ENCODE measurements at regions of chr1 and their contacts with region 1.

Region 1: DNA sequence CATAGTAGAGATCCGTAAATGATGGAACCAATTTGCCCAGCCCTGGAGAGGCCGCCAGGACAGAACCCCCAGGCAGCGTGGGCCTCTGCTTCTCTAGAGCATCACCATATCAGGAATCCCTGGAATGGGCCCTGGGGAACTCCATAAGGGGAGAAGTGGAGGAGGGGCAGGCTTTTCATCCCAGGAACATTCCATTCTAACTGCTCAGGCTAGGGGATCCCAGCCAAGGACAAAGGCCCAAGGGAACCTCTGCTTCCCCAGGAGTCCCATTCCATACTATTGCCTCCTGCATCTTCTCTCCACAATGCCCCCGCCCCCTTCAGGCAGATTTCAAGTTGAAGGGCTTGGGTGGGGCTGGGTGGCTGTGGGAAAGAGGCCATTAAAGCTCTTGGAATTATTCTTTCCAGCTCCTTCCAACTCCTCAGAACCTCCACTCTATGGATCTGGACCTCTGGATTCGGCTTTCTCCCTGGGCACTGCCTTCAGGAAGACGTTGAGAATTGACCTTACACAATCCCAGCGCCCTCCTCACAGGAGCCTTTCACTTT is 6.0 kb downstream of the TRNP1 start:
- DNase-seq: peak; percentile 79 to 94
- H3K4me3 ChIP-seq: peak overlapping the region in 2 of 4 experiments; percentile 15 to 29; a peak in 3 of 8 replicates
- H3K27ac ChIP-seq: peak overlapping the region; percentile 80
- H3K4me1 ChIP-seq: peaks cover 27 to 65% (median 38%) of the 10 kb centered on the region in 4 experiments
- H3K27me3 ChIP-seq: no peaks in the 10 kb centered on the region; a peak in 1 of 7 replicates
- CTCF ChIP-seq: peak in 2 of 3 experiments; percentile 4 to 21; a peak in 1 of 4 replicates
- EP300 ChIP-seq: peak in 1 of 2 experiments; percentile 98; a peak in 2 of 3 replicates
- POLR2A ChIP-seq: peak in 1 of 2 experiments; percentile 87; a peak in 2 of 3 replicates
- RAD21 ChIP-seq: peak in 1 of 2 experiments; percentile 3; a peak in 1 of 4 replicates

Region 2: GRCh38 chr1:26959722-26960615 is 39.5 kb before region 1 on chr1 and contains the start of gene KDF1:
- CTCF ChIA-PET with region 1: interaction called, 5 read pairs
- POLR2A ChIA-PET with region 1: interaction called, 35 read pairs
- DNase-seq: peak; percentile 77 to 95
- H3K4me3 ChIP-seq: peak within 1 kb of the TSS; percentile 84 to 97 (median 86)
- H3K27ac ChIP-seq: peak within 1 kb of the TSS; percentile 76; the same call in 1 of the 2 replicates
- H3K4me1 ChIP-seq: peaks cover 0 to 3% (median 0%) of the 10 kb centered on the region in 4 experiments; a peak in 3 of 7 replicates
- H3K27me3 ChIP-seq: no peaks in the 10 kb centered on the region
- CTCF ChIP-seq: peak; percentile 15 to 34 (median 26); a peak in 2 of 4 replicates
- EP300 ChIP-seq: peak; percentile 4 to 86; a peak in 2 of 3 replicates
- POLR2A ChIP-seq: peak in 1 of 2 experiments; percentile 62; a peak in 1 of 3 replicates
- RAD21 ChIP-seq: no peak; a peak in 1 of 4 replicates
- total RNA-seq, gene KDF1: 16.7 and 16.9 TPM in 2 replicates

Region 3: GRCh38 chr1:27021354-27022031 is 22.0 kb after region 1 on chr1:
- CTCF ChIA-PET with region 1: interaction called, 133 read pairs
- POLR2A ChIA-PET with region 1: interaction called, 1,829 read pairs
- DNase-seq: no peak
- H3K4me3 ChIP-seq: no peak overlapping the region
- H3K27ac ChIP-seq: no peak overlapping the region
- H3K4me1 ChIP-seq: peaks cover 0 to 6% (median 4%) of the 10 kb centered on the region in 4 experiments
- H3K27me3 ChIP-seq: no peaks in the 10 kb centered on the region; a peak in 1 of 7 replicates
- CTCF ChIP-seq: no peak
- EP300 ChIP-seq: no peak
- POLR2A ChIP-seq: no peak
- RAD21 ChIP-seq: no peak

Region 4: GRCh38 chr1:27057801-27058625 is 58.5 kb after region 1 on chr1:
- CTCF ChIA-PET with region 1: interaction called, 6 read pairs
- POLR2A ChIA-PET with region 1: interaction called, 29 read pairs
- DNase-seq: peak in 1 of 2 experiments; percentile 65
- H3K4me3 ChIP-seq: peak overlapping the region in 2 of 4 experiments; percentile 11 to 31; a peak in 4 of 8 replicates
- H3K27ac ChIP-seq: peak overlapping the region; percentile 26; the same call in 1 of the 2 replicates
- H3K4me1 ChIP-seq: peaks cover 3 to 26% (median 19%) of the 10 kb centered on the region in 4 experiments
- H3K27me3 ChIP-seq: no peaks in the 10 kb centered on the region
- CTCF ChIP-seq: no peak
- EP300 ChIP-seq: no peak
- POLR2A ChIP-seq: 0 out of 3 replicates have a peak, but pooled peaks of 1 of the 2 experiments have one; percentile 27
- RAD21 ChIP-seq: no peak

Region 5: GRCh38 chr1:27102707-27103491 is 103.4 kb after region 1 on chr1:
- CTCF ChIA-PET with region 1: interaction called, 35 read pairs
- POLR2A ChIA-PET with region 1: interaction called, 10 read pairs
- DNase-seq: peak; percentile 49 to 100
- H3K4me3 ChIP-seq: no peak overlapping the region
- H3K27ac ChIP-seq: no peak overlapping the region
- H3K4me1 ChIP-seq: peaks cover 0 to 21% (median 14%) of the 10 kb centered on the region in 4 experiments; a peak in 6 of 7 replicates
- H3K27me3 ChIP-seq: no peaks in the 10 kb centered on the region
- CTCF ChIP-seq: peak in 2 of 3 experiments; percentile 97 to 99; a peak in 3 of 4 replicates
- EP300 ChIP-seq: no peak
- POLR2A ChIP-seq: no peak
- RAD21 ChIP-seq: peak; percentile 98 to 99

Region 6: GRCh38 chr1:27290581-27290980 is 291.1 kb after region 1 on chr1:
- CTCF ChIA-PET with region 1: no interaction called
- POLR2A ChIA-PET with region 1: no interaction called
- DNase-seq: no peak
- H3K4me3 ChIP-seq: no peak overlapping the region
- H3K27ac ChIP-seq: no peak overlapping the region
- H3K4me1 ChIP-seq: no peaks in the 10 kb centered on the region
- H3K27me3 ChIP-seq: no peaks in the 10 kb centered on the region
- CTCF ChIP-seq: no peak
- EP300 ChIP-seq: no peak
- POLR2A ChIP-seq: no peak
- RAD21 ChIP-seq: no peak